HCT116 (cell line): ENCODE measurements at regions of chr3 and their contacts with region 1.

Region 1: DNA sequence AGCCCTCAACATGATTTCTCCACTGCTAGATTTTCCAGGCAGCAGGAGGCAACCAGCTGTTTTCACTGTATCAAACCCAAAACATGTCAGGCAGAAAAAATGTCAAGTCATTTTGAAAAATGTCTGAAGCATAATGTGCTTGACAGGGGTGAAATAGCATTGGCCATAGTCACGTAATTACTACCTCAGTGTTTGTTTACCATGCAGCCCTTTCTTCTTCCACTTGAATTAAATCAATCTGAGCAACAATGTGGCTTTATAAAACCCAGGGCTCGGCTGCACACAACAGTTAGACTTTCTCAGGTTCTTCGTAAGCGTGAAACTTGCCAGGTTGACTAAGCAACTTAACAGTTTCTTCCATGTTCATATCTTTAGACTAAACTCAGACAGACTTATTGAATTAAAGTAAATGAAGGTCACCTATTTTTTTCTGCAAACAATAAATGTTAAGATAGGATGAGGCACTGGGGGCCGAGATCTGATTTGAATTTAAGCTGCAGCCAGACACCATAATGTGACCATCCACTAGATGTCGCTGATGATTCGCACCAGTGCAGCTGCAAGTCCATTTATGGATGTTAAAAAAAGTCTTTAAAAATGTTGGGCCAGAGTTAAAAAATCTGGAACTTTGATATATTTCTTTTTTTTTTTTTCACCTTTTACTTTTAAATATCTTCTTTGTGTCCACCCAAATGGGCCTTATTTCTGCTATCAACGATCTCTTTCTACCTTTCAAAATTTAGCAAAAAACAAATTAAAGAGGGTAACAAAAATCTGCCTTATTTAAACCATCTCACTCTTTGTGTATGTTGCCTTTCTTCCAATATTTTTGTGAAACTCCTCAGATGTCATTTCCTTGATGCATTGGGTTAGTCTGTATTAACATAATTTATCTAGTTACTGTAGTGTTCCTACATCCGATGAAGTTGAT is 305.9 kb downstream of the CACNA2D3 start:
- DNase-seq: peak; percentile 36
- ATAC-seq: peak; percentile 49; the same call in 1 of the 2 replicates
- H3K4me3 ChIP-seq: no peak overlapping the region
- H3K27ac ChIP-seq: no peak overlapping the region
- H3K4me1 ChIP-seq: no peaks in the 10 kb centered on the region
- H3K27me3 ChIP-seq: no peaks in the 10 kb centered on the region; the same call in 1 of the 2 replicates
- CTCF ChIP-seq: peak; percentile 31 to 80 (median 80); a peak in 5 of 6 replicates
- POLR2A ChIP-seq: no peak
- RAD21 ChIP-seq: peak; percentile 70

Region 2: DNA sequence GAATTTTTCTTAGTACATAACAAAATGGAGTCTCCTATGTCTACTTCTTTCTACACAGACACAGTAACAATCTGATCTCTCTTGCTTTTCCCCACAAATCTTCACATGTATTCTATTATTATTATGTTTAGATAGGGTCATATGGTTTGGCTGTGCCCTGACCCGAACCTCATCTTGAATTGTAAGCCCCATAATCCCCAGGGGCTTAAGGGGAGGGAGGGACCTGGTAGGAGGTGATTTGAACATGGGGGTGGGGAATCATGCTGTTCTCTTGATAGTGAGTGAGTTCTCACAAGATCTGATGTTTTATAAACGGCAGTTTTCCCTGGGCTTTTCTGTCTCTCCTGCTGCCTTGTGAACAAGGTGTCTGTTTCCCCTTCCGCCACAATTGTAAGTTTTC is 449.8 kb before region 1 on chr3:
- CTCF ChIA-PET with region 1: no interaction called
- POLR2A ChIA-PET with region 1: no interaction called
- RAD21 ChIA-PET with region 1: no interaction called
- intact Hi-C with region 1: no loop called
- DNase-seq: no peak
- ATAC-seq: no peak
- H3K4me3 ChIP-seq: no peak overlapping the region
- H3K27ac ChIP-seq: no peak overlapping the region
- H3K4me1 ChIP-seq: no peaks in the 10 kb centered on the region
- H3K27me3 ChIP-seq: 0 out of 2 replicates have a peak, but pooled peaks cover 5% of the 10 kb centered on the region
- CTCF ChIP-seq: no peak
- POLR2A ChIP-seq: no peak
- RAD21 ChIP-seq: no peak

Region 3: GRCh38 chr3:54326951-54327350 is 101.3 kb before region 1 on chr3:
- CTCF ChIA-PET with region 1: no interaction called
- POLR2A ChIA-PET with region 1: no interaction called
- RAD21 ChIA-PET with region 1: no interaction called
- intact Hi-C with region 1: no loop called
- DNase-seq: no peak
- ATAC-seq: no peak
- H3K4me3 ChIP-seq: no peak overlapping the region
- H3K27ac ChIP-seq: no peak overlapping the region
- H3K4me1 ChIP-seq: no peaks in the 10 kb centered on the region
- H3K27me3 ChIP-seq: peaks cover 16% of the 10 kb centered on the region
- CTCF ChIP-seq: no peak
- POLR2A ChIP-seq: no peak
- RAD21 ChIP-seq: no peak

Region 4: GRCh38 chr3:55091381-55092225 is 663.4 kb after region 1 on chr3:
- CTCF ChIA-PET with region 1: no interaction called
- POLR2A ChIA-PET with region 1: no interaction called
- RAD21 ChIA-PET with region 1: no interaction called
- intact Hi-C with region 1: no loop called
- DNase-seq: no peak
- ATAC-seq: no peak
- H3K4me3 ChIP-seq: no peak overlapping the region
- H3K27ac ChIP-seq: no peak overlapping the region
- H3K4me1 ChIP-seq: no peaks in the 10 kb centered on the region
- H3K27me3 ChIP-seq: no peaks in the 10 kb centered on the region
- CTCF ChIP-seq: no peak
- POLR2A ChIP-seq: no peak
- RAD21 ChIP-seq: no peak

Region 5: DNA sequence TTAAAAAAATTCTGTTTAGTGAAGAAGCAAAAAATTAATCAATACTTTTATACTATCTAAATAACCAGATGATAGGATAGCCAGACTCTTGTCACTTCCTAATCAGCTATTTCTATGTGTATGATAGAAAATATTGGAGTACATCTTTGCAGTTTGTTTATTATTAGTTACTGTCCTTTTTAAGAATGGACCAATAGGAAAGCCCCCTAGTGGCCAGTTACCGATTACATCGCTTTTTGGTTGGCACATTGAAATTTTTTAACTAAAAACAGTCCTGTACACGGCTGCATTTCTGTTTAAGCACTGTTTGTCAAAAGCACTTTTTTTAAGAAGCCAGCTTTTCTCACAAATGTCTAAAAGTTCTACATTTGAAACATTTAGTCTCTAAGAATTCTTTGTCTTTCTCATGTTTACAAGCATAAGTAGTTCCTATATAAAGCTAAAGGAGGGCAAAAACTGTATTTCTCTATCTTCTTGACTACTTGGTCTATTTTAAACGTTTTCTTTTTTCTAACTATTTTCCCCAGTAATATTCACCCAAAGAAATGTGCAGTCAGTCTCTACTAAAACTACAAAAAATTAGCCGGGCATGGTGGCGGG is 752.8 kb after region 1 on chr3:
- CTCF ChIA-PET with region 1: no interaction called
- POLR2A ChIA-PET with region 1: no interaction called
- RAD21 ChIA-PET with region 1: no interaction called
- intact Hi-C with region 1: loop called (anchors 5 kb)
- DNase-seq: no peak
- ATAC-seq: no peak
- H3K4me3 ChIP-seq: no peak overlapping the region
- H3K27ac ChIP-seq: no peak overlapping the region
- H3K4me1 ChIP-seq: no peaks in the 10 kb centered on the region
- H3K27me3 ChIP-seq: no peaks in the 10 kb centered on the region
- CTCF ChIP-seq: peak in 2 of 3 experiments; percentile 63 to 67; a peak in 4 of 6 replicates
- POLR2A ChIP-seq: no peak
- RAD21 ChIP-seq: 0 out of 2 replicates have a peak, but pooled peaks have one; percentile 9